ENCODE measurements at regions of chr14 and their contacts with region 1.

Region 1: DNA sequence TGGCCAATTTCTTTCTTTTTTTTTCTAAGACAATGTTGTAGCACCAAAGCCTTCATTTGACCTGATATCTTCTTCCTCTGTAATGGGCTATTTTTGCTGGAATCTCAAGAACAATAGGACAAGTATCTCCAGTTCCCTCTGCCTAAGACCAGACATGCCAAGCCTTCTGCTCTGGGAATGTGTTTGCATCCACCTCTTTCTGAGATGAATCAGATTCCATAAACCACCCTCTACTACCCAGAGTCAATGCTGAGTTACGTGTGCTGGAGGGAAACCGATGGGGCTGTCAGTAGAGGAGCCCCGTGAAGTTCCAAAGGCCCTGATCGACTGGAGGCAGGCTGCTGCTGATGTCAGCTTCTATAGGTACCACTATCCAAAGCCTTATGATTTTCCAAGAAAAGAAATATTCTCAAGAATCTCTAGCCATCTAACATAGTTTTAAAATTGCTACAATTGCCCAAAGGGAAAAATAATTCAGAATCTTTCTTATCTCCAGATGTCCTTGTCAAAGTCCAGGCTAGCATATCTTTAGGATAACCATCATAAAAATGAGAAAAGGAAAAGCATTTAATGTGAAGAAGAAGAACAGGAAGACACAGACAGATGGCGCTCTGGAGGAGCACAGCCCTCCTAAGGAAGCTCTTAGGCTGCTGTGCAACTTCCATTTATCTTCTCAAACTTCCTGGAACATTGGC is 101.9 kb downstream of the SLC8A3 start:
- DNase-seq: no peak
- ATAC-seq: peak in 1 of 2 donors; percentile 64
- H3K4me3 ChIP-seq: no peak overlapping the region
- H3K27ac ChIP-seq: no peak overlapping the region
- H3K4me1 ChIP-seq: peaks cover 10 to 19% of the 10 kb centered on the region in 2 donors
- H3K27me3 ChIP-seq: no peaks in the 10 kb centered on the region
- CTCF ChIP-seq: peak in 4 of 5 experiments; percentile 24 to 44 (median 29)
- POLR2A ChIP-seq: no peak

Region 2: DNA sequence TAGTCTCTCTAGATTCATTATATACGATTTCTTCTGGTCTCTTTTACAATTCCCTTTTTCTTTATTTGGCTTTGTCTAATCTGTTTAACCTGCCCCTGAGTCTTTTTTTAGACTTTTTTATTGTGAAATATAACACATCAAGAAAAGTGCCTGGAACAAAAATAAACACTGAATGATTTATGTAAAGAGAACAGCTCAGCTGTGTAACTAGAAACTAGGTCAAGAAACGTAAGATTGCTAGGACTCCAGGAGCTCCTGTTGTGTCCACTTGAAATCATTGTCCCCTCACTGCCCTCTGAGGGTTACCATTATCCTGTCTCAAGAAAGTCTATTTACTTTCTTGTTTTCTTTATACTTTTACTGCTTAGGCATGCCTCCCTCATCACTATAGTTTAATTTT is 872.4 kb before region 1 on chr14:
- in situ Hi-C with region 1: no loop called
- intact Hi-C with region 1: no loop called
- DNase-seq: peak; percentile 10 to 41
- ATAC-seq: peak; percentile 100
- H3K4me3 ChIP-seq: no peak overlapping the region
- H3K27ac ChIP-seq: peak overlapping the region; percentile 67 to 83 (median 72)
- H3K4me1 ChIP-seq: peaks cover 15 to 25% of the 10 kb centered on the region in 2 donors
- H3K27me3 ChIP-seq: no peaks in the 10 kb centered on the region
- CTCF ChIP-seq: no peak
- POLR2A ChIP-seq: no peak

Region 3: DNA sequence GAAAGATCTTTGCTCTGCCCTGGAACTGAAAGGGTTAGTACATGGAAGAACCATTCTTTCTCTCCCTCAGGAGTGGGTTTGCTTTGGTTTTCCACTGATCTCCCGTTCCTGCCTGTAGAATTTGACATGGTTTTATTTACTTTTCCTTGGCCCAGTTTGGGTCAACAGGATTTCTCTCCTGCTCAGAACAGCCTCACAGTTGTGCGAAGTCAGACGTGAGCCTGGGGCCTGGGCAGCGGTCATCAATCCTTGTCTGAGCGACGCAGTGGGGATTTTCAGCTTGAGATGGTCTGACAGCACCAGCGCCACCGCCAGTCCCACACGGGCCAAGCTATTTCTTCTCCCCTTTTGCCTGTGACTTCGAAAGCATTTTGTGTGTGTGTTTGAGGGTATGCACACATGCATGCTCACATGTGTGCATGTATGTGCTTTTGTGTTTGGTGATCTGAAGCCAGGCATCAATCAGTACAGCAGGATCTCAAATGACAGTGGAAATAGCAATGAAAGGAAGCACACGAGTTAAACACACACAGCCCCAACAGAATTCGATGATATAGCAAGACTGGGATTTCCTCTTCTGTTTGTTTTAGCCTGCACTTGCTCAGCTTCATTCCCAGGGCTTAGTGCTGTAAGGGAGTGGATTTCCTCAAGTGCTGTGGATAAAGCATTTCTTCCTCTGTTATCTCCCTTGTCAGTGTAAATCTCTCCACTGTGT is 149.3 kb before region 1 on chr14:
- in situ Hi-C with region 1: no loop called
- intact Hi-C with region 1: no loop called
- DNase-seq: no peak
- ATAC-seq: no peak
- H3K4me3 ChIP-seq: no peak overlapping the region
- H3K27ac ChIP-seq: no peak overlapping the region
- H3K4me1 ChIP-seq: no peaks in the 10 kb centered on the region
- H3K27me3 ChIP-seq: no peaks in the 10 kb centered on the region
- CTCF ChIP-seq: no peak
- POLR2A ChIP-seq: no peak

Region 4: DNA sequence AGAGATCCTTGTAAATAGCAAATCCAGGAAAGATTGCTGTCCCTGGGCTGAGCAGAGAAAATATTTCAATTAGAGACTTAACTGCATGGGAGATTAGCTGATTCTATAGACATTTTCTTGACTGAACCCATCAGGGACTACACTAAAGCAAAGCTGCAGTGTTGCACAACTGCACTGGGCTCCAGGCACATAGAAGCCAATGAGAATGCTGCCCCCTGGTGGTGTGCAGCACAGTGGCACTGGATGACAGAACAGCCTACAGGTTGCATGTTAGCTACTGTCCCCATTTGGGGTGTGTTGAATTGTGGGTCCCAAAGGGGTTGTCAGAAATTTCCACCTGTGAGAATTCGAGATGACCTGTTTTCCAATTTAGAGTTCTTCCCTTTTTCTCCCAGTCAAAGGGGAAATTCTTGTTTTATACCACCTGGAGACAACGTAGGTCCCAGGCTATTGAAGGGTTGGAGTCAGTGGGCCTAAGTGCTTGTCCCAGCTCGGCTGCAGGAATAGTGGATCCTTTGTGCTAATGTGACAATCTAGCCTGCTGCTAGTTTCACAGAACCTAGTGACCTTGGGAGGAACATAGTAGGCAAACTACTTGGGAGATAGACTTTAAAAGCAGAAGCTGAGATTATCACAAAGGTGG is 12.8 kb before region 1 on chr14:
- in situ Hi-C with region 1: no loop called
- intact Hi-C with region 1: loop called (anchors 2 kb)
- DNase-seq: peak; percentile 7 to 53
- ATAC-seq: peak in 1 of 2 donors; percentile 72
- H3K4me3 ChIP-seq: no peak overlapping the region
- H3K27ac ChIP-seq: no peak overlapping the region
- H3K4me1 ChIP-seq: peaks cover 5 to 12% of the 10 kb centered on the region in 2 donors
- H3K27me3 ChIP-seq: no peaks in the 10 kb centered on the region
- CTCF ChIP-seq: peak; percentile 51 to 74 (median 66)
- POLR2A ChIP-seq: no peak

Region 5: GRCh38 chr14:70177081-70177800 is 90.4 kb after region 1 on chr14:
- in situ Hi-C with region 1: no loop called
- intact Hi-C with region 1: no loop called
- DNase-seq: no peak
- ATAC-seq: no peak
- H3K4me3 ChIP-seq: no peak overlapping the region
- H3K27ac ChIP-seq: no peak overlapping the region
- H3K4me1 ChIP-seq: peaks cover 30 to 36% of the 10 kb centered on the region in 2 donors
- H3K27me3 ChIP-seq: no peaks in the 10 kb centered on the region
- CTCF ChIP-seq: no peak
- POLR2A ChIP-seq: no peak

Region 6: GRCh38 chr14:70254476-70254961 is 167.7 kb after region 1 on chr14:
- in situ Hi-C with region 1: no loop called
- intact Hi-C with region 1: loop called (anchors 2 kb)
- DNase-seq: peak in 1 of 2 donors; percentile 37
- ATAC-seq: peak in 1 of 2 donors; percentile 64
- H3K4me3 ChIP-seq: peak overlapping the region; percentile 49 to 71 (median 52)
- H3K27ac ChIP-seq: no peak overlapping the region
- H3K4me1 ChIP-seq: no peaks in the 10 kb centered on the region
- H3K27me3 ChIP-seq: peaks cover 0 to 3% (median 0%) of the 10 kb centered on the region in 3 donors
- CTCF ChIP-seq: no peak
- POLR2A ChIP-seq: no peak